BJ (cell line): ENCODE measurements at regions of chr16 and their contacts with region 1.

Region 1: GRCh38 chr16:29961479-29962343 is at the start of gene TMEM219:
- DNase-seq: peak; percentile 61
- H3K4me3 ChIP-seq: peak within 1 kb of the TSS; percentile 86
- H3K27me3 ChIP-seq: no peaks in the 10 kb centered on the region
- CTCF ChIP-seq: peak; percentile 43
- polyA plus RNA-seq, gene TMEM219: 112 and 146 TPM in 2 replicates

Region 2: DNA sequence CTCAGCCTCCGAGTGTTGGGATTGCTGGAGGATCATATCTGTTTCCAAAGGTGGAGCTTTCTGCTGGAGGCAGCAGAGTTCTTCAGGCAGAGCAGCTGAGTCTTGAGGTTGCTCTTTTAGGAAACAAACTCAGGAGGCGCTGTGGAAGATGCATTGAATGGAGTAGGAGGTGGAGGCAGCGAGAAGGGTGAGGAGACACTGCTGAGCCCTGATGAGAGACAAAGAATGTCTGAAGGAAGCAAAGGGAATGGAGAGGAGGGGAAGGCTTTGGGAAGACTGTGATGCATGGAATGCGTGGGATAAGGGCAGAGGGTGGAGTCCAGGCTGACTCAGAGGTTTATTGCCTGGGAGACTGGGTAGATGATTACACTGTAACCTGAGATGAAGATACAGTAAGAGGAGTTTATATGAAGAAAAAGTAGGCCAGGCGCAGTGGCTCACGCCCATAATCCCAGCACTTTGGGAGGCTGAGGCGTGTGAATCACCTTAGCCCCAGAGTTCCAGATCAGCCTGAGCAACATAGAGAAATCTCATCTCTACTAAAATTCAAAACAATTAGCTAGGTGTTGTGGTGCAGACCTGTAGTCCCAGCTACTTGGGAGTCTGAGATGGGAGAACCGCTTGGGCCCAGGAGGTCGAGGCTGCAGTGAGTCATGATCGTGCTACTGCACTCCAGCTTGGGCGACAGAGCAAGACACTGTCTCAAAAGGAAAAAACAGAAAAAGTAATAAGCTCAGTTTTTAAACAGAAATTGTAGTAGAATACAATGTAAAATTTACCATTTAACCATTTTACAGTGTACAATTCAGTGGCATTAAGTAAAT is 17.7 kb before region 1 on chr16:
- CTCF ChIA-PET with region 1: interaction called, 13 read pairs
- POLR2A ChIA-PET with region 1: no interaction called
- DNase-seq: peak; percentile 99
- H3K4me3 ChIP-seq: no peak overlapping the region
- H3K27me3 ChIP-seq: no peaks in the 10 kb centered on the region
- CTCF ChIP-seq: peak; percentile 58